ENCODE measurements at regions of chr3 and their contacts with region 1.

Region 1: DNA sequence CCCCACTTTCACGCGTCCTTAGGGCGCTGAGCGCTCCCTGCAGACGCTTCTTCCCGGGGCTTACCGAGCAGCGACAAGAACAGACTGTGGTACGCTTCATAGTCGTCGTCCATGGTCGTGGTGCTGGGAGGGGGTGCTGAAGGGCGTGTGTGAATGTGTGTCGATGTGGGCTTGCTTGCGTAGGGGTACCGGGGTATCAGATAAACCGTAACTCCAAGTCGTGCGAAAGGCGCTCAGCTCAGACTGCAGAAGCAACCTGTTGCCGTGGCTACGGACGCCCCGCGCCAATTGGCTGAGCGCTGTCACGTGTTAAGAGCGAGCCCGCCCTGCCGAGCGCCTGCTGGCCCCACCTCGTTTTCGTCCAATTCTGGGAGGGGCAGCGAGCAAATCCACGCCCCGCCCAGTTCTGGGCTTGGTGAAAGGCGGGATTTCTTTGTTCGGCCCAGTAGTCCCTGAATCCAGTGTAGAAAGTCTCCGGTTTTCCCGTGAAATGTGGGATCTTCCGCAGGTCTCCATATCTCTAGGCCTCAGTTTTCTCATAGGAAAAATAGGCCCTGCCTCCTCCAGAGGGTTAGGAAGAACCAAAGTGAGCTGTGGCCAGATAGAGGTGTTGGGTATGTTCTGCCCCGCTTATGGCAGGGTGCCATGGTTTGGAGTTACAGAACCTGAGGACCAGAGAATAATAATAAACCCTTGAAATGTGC is at the start of gene EFCAB12:
- DNase-seq: peak; percentile 33
- H3K4me3 ChIP-seq: peak within 1 kb of the TSS; percentile 75
- CTCF ChIP-seq: no peak

Region 2: DNA sequence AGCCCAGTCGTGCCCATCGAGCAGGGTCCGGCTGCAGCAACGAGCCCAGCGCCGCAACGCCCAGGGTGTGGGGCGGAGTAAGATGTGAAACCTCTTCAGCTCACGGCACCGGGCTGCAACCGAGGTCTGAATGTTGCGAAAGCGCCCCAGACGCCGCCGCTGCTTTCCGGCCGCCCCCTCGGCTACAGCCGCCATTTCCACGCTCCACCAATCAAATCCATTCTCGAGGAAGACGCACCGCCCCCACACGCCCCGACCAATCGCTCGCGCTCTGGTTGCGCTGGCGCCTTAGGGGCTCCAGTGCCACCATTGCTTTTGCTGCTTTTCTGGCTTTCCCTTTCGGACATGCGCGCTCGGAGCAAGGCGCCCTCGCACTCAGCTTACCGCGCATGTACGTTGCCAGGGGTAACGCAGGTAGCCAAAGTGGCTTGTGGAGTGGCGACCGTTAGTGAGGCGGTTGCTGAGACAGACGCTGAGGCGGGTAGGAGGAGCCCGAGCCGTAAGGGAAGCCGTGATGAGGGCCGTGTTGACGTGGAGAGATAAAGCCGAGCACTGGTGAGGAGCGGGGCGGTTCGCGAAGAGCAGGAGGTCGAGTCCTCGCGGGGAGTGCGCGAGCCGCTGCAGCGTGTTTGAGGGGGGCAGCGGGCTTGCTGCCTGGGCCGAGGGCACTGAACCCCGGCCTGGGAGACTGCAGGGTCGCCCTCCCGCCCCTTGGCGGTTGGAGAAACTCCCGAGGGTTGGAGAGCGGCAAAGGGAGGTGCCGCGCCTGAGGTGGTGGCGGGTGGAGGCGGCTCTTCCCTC is 11.5 kb after region 1 on chr3 and contains the starts of genes IFT122 and MBD4:
- CTCF ChIA-PET with region 1: interaction called, 5 read pairs
- POLR2A ChIA-PET with region 1: interaction called, 13 read pairs
- DNase-seq: peak; percentile 95
- H3K4me3 ChIP-seq: peak within 1 kb of the TSS; percentile 93
- CTCF ChIP-seq: no peak

Measured in AG04449 (cell line).